ENCODE measurements at regions of chr9 and their contacts with region 1.

Region 1: GRCh38 chr9:124551472-124552272 is 44.5 kb upstream of the NR5A1 start:
- DNase-seq: peak; percentile 30
- H3K4me3 Mint-ChIP-seq: no peak overlapping the region
- H3K27ac Mint-ChIP-seq: no peak overlapping the region
- H3K4me1 Mint-ChIP-seq: no peaks in the 10 kb centered on the region
- H3K27me3 Mint-ChIP-seq: peaks cover 16% of the 10 kb centered on the region

Region 2: GRCh38 chr9:124427281-124427680 is 124.4 kb before region 1 on chr9:
- CTCF ChIA-PET with region 1: no interaction called
- POLR2A ChIA-PET with region 1: no interaction called
- DNase-seq: no peak
- H3K4me3 Mint-ChIP-seq: no peak overlapping the region
- H3K27ac Mint-ChIP-seq: no peak overlapping the region
- H3K4me1 Mint-ChIP-seq: no peaks in the 10 kb centered on the region
- H3K27me3 Mint-ChIP-seq: peaks cover 10% of the 10 kb centered on the region

Region 3: DNA sequence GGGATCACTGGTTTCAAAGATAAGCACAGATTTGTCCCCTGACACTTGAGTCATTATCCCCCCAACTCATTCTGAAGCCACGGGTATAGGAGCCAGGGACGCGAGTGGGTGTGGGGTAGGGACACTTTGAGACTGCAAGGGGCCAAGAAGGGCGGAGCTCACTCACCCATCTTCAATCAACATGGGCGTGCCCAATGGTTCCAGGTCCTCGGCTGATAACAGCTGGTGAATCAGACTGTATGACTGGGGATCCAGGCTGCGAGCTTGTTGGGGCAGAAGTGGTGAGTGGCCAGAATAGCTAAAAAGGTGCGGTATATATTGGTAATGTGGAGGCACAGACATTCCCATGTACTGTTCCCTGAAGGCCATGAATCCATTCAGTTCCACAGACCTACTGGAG is 13.7 kb before region 1 on chr9:
- CTCF ChIA-PET with region 1: interaction called, 25 read pairs
- POLR2A ChIA-PET with region 1: no interaction called
- DNase-seq: no peak
- H3K4me3 Mint-ChIP-seq: no peak overlapping the region
- H3K27ac Mint-ChIP-seq: no peak overlapping the region
- H3K4me1 Mint-ChIP-seq: no peaks in the 10 kb centered on the region
- H3K27me3 Mint-ChIP-seq: peaks cover 20% of the 10 kb centered on the region

Region 4: DNA sequence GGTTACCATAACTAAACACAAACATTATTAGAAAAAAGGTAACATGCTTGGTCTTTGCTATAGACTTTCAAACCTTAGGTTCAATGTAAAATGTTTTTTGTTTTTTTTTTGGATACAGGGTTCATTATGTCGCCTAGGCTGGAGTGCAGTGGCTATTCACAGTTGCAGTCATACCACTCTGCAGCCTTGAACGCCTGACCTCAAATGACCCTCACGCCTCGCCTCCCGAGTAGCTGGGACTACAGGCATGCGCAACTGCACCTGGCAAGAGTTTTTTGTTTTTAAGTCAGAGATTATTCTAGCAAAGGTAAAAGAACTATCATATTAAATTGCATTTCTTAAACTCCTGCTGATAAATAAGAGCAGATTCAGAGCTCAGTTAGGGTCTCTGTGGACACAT is 10.7 kb after region 1 on chr9:
- CTCF ChIA-PET with region 1: interaction called, 16 read pairs
- POLR2A ChIA-PET with region 1: no interaction called
- DNase-seq: no peak
- H3K4me3 Mint-ChIP-seq: no peak overlapping the region
- H3K27ac Mint-ChIP-seq: no peak overlapping the region
- H3K4me1 Mint-ChIP-seq: no peaks in the 10 kb centered on the region
- H3K27me3 Mint-ChIP-seq: peaks cover 18% of the 10 kb centered on the region

Region 5: DNA sequence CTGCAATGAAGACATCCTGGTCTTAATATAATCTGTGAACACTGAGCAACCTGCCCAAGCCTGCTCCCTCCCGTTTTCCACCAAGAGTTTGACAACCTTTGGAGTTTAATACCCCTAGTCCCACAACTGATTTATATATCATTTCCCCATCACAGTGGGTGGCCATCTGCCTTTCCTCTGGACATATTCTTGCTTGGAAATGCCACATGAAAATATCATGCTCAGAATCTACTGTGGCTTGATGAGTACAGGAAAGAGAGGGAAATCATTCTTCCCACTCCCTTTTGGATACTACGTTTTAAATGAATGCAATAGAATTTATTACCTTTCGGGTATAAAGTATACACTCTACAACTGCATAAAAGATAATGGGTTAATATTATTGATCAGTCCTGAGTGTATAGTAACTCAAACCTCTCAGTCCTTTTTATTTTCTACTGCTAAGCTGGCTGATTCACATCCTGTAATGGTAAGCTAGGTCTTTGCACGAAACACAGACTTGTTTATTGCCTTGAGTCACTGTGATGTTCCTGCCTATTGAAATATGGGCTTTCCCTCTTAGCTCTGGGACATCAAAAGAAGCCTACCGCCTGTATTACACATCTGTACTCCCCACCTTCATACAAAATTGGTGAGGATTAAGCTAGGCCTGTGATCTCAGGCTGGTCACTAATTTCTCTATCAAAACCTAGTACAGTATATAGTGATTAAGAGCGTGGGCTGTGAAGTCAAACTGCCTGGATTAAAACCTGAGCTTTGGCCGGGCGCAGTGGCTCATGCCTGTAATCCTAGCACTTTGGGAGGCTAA is 23.1 kb after region 1 on chr9:
- CTCF ChIA-PET with region 1: interaction called, 10 read pairs
- POLR2A ChIA-PET with region 1: no interaction called
- DNase-seq: no peak
- H3K4me3 Mint-ChIP-seq: no peak overlapping the region
- H3K27ac Mint-ChIP-seq: no peak overlapping the region
- H3K4me1 Mint-ChIP-seq: no peaks in the 10 kb centered on the region
- H3K27me3 Mint-ChIP-seq: peaks cover 37% of the 10 kb centered on the region

Region 6: GRCh38 chr9:124639637-124640036 is 88.0 kb after region 1 on chr9:
- CTCF ChIA-PET with region 1: no interaction called
- POLR2A ChIA-PET with region 1: no interaction called
- DNase-seq: no peak
- H3K4me3 Mint-ChIP-seq: no peak overlapping the region
- H3K27ac Mint-ChIP-seq: no peak overlapping the region
- H3K4me1 Mint-ChIP-seq: no peaks in the 10 kb centered on the region
- H3K27me3 Mint-ChIP-seq: peaks cover 37% of the 10 kb centered on the region

Region 7: GRCh38 chr9:124708633-124709291 is 157.1 kb after region 1 on chr9:
- CTCF ChIA-PET with region 1: interaction called, 19 read pairs
- POLR2A ChIA-PET with region 1: no interaction called
- DNase-seq: no peak
- H3K4me3 Mint-ChIP-seq: no peak overlapping the region
- H3K27ac Mint-ChIP-seq: no peak overlapping the region
- H3K4me1 Mint-ChIP-seq: no peaks in the 10 kb centered on the region
- H3K27me3 Mint-ChIP-seq: peaks cover 18% of the 10 kb centered on the region

Measured in activated CD4-positive, alpha-beta memory T cell treated with anti-CD3 and anti-CD28 coated beads, Interleukin-2, amount 10 ng/mL, durations not matched to agents 7 days and 5 days (primary cell).